ENCODE measurements at regions of chr10 and their contacts with region 1.

Region 1: GRCh38 chr10:91006001-91006751 is 85.3 kb upstream of the ANKRD1 start:
- DNase-seq: peak; percentile 90
- H3K4me3 Mint-ChIP-seq: peak overlapping the region; percentile 22
- H3K27ac Mint-ChIP-seq: peak overlapping the region; percentile 51
- H3K4me1 Mint-ChIP-seq: peaks cover 25% of the 10 kb centered on the region
- H3K27me3 Mint-ChIP-seq: peaks cover 27% of the 10 kb centered on the region

Region 2: GRCh38 chr10:90871766-90872647 is 134.2 kb before region 1 on chr10 and contains the start of gene RPP30:
- intact Hi-C with region 1: loop called (anchors 2 kb)
- DNase-seq: peak; percentile 96
- H3K4me3 Mint-ChIP-seq: peak within 1 kb of the TSS; percentile 97
- H3K27ac Mint-ChIP-seq: peak within 1 kb of the TSS; percentile 96
- H3K4me1 Mint-ChIP-seq: peaks cover 32% of the 10 kb centered on the region
- H3K27me3 Mint-ChIP-seq: peaks cover 25% of the 10 kb centered on the region
- total RNA-seq, gene RPP30: 86.4 and 86.9 TPM in 2 replicates

Region 3: GRCh38 chr10:91034494-91035159 is 28.5 kb after region 1 on chr10:
- intact Hi-C with region 1: loop called (anchors 1 kb)
- DNase-seq: no peak
- H3K4me3 Mint-ChIP-seq: peak overlapping the region; percentile 58
- H3K27ac Mint-ChIP-seq: peak overlapping the region; percentile 58
- H3K4me1 Mint-ChIP-seq: peaks cover 13% of the 10 kb centered on the region
- H3K27me3 Mint-ChIP-seq: peaks cover 20% of the 10 kb centered on the region

Region 4: GRCh38 chr10:91163269-91163868 is 157.2 kb after region 1 on chr10:
- intact Hi-C with region 1: loop called (anchors 1 kb)
- DNase-seq: peak; percentile 92
- H3K4me3 Mint-ChIP-seq: peak overlapping the region; percentile 89
- H3K27ac Mint-ChIP-seq: peak overlapping the region; percentile 92
- H3K4me1 Mint-ChIP-seq: peaks cover 33% of the 10 kb centered on the region
- H3K27me3 Mint-ChIP-seq: peaks cover 6% of the 10 kb centered on the region

Region 5: GRCh38 chr10:91206427-91206826 is 200.3 kb after region 1 on chr10:
- intact Hi-C with region 1: loop called (anchors 2 kb)
- DNase-seq: no peak
- H3K4me3 Mint-ChIP-seq: peak overlapping the region; percentile 53
- H3K27ac Mint-ChIP-seq: peak overlapping the region; percentile 67
- H3K4me1 Mint-ChIP-seq: peaks cover 58% of the 10 kb centered on the region
- H3K27me3 Mint-ChIP-seq: no peaks in the 10 kb centered on the region

Region 6: DNA sequence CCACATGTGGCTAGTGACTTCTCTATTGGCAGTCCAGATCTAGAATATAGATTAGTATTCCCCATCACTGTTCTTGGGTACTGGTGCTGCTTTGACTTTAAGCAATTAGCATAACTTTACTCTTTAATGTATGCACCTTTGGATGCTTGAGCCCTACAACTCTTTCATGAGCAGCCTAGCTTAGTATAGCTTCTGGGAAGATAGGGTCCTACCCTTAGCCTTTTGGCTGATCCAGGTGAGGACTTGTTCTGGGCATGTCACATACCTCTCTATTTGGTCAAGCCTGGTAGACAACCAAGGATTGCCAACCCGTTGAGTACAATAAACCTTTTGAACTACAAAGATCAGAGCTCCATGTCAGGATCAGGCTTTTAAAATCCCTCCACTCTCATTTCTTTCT is 232.0 kb after region 1 on chr10:
- intact Hi-C with region 1: no loop called
- DNase-seq: no peak
- H3K4me3 Mint-ChIP-seq: no peak overlapping the region
- H3K27ac Mint-ChIP-seq: no peak overlapping the region
- H3K4me1 Mint-ChIP-seq: peaks cover 14% of the 10 kb centered on the region
- H3K27me3 Mint-ChIP-seq: no peaks in the 10 kb centered on the region

Region 7: DNA sequence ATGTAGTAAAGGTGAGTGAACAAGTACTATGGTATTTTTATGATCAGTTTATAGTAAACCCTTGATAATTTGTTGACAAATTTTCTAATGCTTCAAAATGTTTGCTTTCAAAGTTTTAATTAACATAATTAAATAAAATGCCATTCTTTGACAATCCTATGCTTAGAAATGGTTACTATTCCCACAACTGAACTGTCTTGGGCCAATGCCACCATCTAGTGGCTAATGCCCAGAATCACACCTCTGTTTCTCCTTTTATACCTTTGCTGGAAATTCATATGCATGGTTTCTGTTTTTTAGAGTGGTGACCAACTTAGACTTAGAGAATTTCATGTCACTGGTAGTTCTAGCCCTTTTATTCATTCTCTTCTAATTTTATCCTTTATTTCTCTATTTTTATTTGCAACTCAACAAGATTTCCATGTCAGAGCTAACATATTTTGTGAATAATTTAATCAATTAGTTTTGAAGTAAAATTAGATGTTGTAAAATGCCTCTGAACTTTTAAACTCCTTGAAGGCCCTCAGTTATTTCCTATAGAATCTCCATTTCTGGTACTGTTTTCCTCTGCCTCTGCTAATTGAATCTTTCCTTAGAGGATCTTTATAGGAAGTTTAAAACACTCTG is 245.4 kb after region 1 on chr10:
- intact Hi-C with region 1: loop called (anchors 1 kb)
- DNase-seq: peak; percentile 85
- H3K4me3 Mint-ChIP-seq: no peak overlapping the region
- H3K27ac Mint-ChIP-seq: no peak overlapping the region
- H3K4me1 Mint-ChIP-seq: peaks cover 3% of the 10 kb centered on the region
- H3K27me3 Mint-ChIP-seq: no peaks in the 10 kb centered on the region

Measured in activated CD4-positive, alpha-beta T cell treated with anti-CD3 and anti-CD28 coated beads, Interleukin-2, amount 10 ng/mL, durations not matched to agents 24 days and 14 days (primary cell).